ENCODE measurements at regions of chr6 and their contacts with region 1.

Region 1: DNA sequence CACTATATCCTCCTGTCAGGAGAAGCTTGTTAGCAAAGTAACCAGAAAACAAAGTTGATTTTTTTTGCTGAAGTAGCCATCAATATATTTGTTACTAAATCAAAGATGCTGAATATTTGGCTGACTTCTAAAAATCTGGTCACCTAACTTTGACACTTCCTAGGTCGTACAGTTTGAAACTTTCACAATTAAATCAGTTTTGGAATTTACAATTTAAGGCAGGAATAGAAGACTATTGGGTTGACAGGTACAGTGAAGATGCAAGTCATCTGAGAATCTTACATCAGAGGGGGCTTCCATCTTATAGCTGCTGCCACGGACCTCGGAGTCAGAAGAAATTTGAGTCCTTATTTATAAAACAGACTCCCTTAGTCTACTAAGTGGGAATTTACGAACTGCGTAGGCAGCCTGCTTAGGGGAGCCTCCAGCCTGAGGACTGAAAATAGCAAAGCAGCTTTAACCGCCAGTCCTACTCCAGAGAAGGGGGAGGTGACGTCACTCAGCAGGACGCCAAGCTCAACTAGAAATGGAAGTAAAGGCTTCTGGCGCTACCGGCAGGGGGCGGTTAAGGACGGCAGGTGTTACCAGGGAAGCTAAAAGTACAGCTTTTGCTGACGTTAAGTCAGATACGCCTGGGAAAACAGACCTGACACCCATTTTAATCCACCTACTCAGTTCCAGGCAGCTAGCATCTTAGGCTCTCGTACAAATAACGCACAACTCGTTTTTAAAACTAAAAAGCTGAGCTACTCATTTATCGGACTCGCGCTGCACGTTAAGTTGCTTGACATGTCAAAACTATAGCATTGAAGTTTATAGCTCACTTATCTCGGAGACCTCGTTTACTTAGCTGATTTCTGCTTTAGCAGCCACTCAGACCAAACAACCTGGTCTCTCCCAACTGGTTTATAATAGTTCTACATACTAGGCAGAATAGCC is 61.1 kb upstream of the HFE start:
- DNase-seq: peak; percentile 94 to 98 (median 97)
- H3K4me3 ChIP-seq: peak overlapping the region; percentile 77
- H3K27ac ChIP-seq: peak overlapping the region; percentile 66 to 88
- H3K4me1 ChIP-seq: peaks cover 4% of the 10 kb centered on the region
- H3K27me3 ChIP-seq: no peaks in the 10 kb centered on the region
- CTCF ChIP-seq: peak; percentile 33 to 97 (median 91)
- EP300 ChIP-seq: no peak
- POLR2A ChIP-seq: peak; percentile 56

Region 2: GRCh38 chr6:26196846-26197648 is 170.9 kb after region 1 on chr6:
- intact Hi-C with region 1: loop called in 2 of 4 experiments (anchors 10 kb)
- DNase-seq: peak; percentile 76 to 85 (median 81)
- H3K4me3 ChIP-seq: peak overlapping the region; percentile 55
- H3K27ac ChIP-seq: peak overlapping the region; percentile 35 to 82
- H3K4me1 ChIP-seq: no peaks in the 10 kb centered on the region
- H3K27me3 ChIP-seq: no peaks in the 10 kb centered on the region
- CTCF ChIP-seq: peak in 1 of 3 donors; percentile 23
- EP300 ChIP-seq: no peak
- POLR2A ChIP-seq: peak; percentile 93

Region 3: GRCh38 chr6:27132532-27133280 is 1106.5 kb after region 1 on chr6:
- intact Hi-C with region 1: loop called in 2 of 4 experiments (anchors 10 kb)
- DNase-seq: peak; percentile 71 to 87 (median 77)
- H3K4me3 ChIP-seq: peak overlapping the region; percentile 56
- H3K27ac ChIP-seq: peak overlapping the region; percentile 15 to 64
- H3K4me1 ChIP-seq: no peaks in the 10 kb centered on the region
- H3K27me3 ChIP-seq: no peaks in the 10 kb centered on the region
- CTCF ChIP-seq: no peak
- EP300 ChIP-seq: no peak
- POLR2A ChIP-seq: peak; percentile 68

Region 4: GRCh38 chr6:27809939-27810767 is 1784.0 kb after region 1 on chr6:
- intact Hi-C with region 1: loop called in 1 of 4 experiments (anchors 10 kb)
- DNase-seq: peak; percentile 82 to 90 (median 85)
- H3K4me3 ChIP-seq: peak overlapping the region; percentile 46
- H3K27ac ChIP-seq: peak overlapping the region; percentile 48 to 92
- H3K4me1 ChIP-seq: peaks cover 7% of the 10 kb centered on the region
- H3K27me3 ChIP-seq: no peaks in the 10 kb centered on the region
- CTCF ChIP-seq: peak in 1 of 3 donors; percentile 42
- EP300 ChIP-seq: no peak
- POLR2A ChIP-seq: peak; percentile 97